CD14-positive monocyte (primary cell): ENCODE measurements at regions of chr2 and their contacts with region 1.

Region 1: GRCh38 chr2:24084386-24085361 is at the start of gene TP53I3:
- DNase-seq: peak; percentile 78 to 87 (median 85)
- H3K4me3 ChIP-seq: peak within 1 kb of the TSS; percentile 42 to 92 (median 74)
- H3K4me3 Mint-ChIP-seq: peak within 1 kb of the TSS; percentile 94
- H3K27ac ChIP-seq: peak within 1 kb of the TSS; percentile 86 to 92
- H3K27ac Mint-ChIP-seq: peak within 1 kb of the TSS; percentile 87 to 95 (median 93)
- H3K4me1 ChIP-seq: peaks cover 44 to 56% of the 10 kb centered on the region in 2 donors
- H3K4me1 Mint-ChIP-seq: peaks cover 53% of the 10 kb centered on the region
- H3K27me3 ChIP-seq: no peaks in the 10 kb centered on the region
- H3K27me3 Mint-ChIP-seq: peaks cover 0 to 1% (median 0%) of the 10 kb centered on the region in 3 donors
- CTCF ChIP-seq: peak; percentile 98
- polyA plus RNA-seq, gene TP53I3: 24.5 to 41.7 (median 34.9) TPM

Region 2: GRCh38 chr2:23824777-23825212 is 259.9 kb before region 1 on chr2:
- intact Hi-C with region 1: loop called (anchors 5 kb)
- DNase-seq: peak; percentile 16 to 42 (median 33)
- H3K4me3 ChIP-seq: no peak overlapping the region
- H3K4me3 Mint-ChIP-seq: no peak overlapping the region
- H3K27ac ChIP-seq: no peak overlapping the region
- H3K27ac Mint-ChIP-seq: peak overlapping the region in 1 of 7 donors; percentile 45
- H3K4me1 ChIP-seq: peaks cover 3 to 8% of the 10 kb centered on the region in 2 donors
- H3K4me1 Mint-ChIP-seq: peaks cover 14% of the 10 kb centered on the region
- H3K27me3 ChIP-seq: no peaks in the 10 kb centered on the region
- H3K27me3 Mint-ChIP-seq: no peaks in the 10 kb centered on the region
- CTCF ChIP-seq: peak; percentile 83

Region 3: DNA sequence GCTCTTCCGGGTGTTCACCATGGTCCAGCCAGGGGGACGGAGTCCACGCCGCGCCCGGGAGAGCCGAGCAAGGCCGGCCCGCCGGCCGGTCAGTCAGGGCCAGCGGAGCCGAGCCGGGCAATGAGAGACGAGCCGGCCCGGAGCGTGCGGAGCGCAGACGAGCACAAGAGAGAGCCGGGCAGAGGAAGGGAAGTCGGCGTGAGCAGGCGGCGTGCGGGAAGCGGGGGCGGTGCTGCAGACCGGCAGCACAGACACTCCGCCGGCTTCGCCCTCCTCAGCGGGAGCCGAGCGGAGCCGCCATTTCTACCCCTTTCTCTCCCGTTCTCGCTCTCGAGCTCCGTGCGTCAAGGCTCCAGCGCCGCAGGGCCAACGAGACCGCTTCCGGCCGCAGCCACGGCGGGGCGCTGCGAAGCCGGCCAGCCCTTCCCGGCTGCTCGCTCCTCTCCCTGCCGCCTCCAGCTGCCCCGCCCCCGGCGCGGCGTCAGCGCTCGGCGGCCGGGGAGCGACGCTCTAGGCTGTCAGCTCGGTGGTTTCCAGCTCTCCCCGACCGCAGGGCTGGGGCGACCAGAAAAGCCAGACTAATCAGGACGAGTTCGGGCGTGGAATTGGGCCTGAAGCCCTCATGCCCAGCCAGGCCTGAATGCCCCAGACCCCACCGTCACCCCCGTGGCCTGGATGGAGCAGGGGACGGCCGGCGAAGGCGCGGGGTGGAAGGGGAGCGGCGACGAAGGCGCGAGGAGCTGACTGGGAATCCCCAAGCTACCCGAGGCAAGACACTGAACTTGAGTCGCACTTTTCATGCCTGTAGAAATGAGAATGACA is 157.7 kb before region 1 on chr2 and contains the start of gene ATAD2B:
- intact Hi-C with region 1: loop called (anchors 2 to 5 kb)
- DNase-seq: peak; percentile 91 to 94 (median 93)
- H3K4me3 ChIP-seq: peak within 1 kb of the TSS; percentile 90 to 97 (median 90)
- H3K4me3 Mint-ChIP-seq: peak within 1 kb of the TSS; percentile 95 to 97
- H3K27ac ChIP-seq: peak within 1 kb of the TSS; percentile 98 to 99
- H3K27ac Mint-ChIP-seq: peak within 1 kb of the TSS; percentile 99 to 100 (median 99)
- H3K4me1 ChIP-seq: peaks cover 20 to 33% of the 10 kb centered on the region in 2 donors
- H3K4me1 Mint-ChIP-seq: peaks cover 43% of the 10 kb centered on the region
- H3K27me3 ChIP-seq: no peaks in the 10 kb centered on the region
- H3K27me3 Mint-ChIP-seq: no peaks in the 10 kb centered on the region
- CTCF ChIP-seq: peak; percentile 82
- polyA plus RNA-seq, gene ATAD2B: 4.9 to 12.1 (median 7.2) TPM

Region 4: DNA sequence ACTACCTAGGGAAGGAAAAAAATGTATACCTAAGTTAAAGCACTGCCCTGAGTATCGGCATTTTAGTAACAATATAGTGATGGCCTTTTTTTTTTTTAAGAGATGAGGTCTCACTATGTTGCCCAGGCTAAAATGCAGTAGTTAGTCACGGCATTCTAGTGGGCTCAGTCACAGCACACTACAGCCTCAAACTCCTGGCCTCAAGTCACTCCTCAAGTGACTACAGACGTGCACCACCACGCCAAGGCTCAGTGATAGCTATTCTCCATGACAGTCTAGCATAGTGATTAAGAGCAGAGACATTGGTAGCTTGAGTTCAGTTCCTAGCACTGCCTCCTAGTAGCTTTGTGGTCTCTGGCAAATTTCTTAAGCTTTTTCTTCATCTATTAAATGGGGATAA is 116.8 kb before region 1 on chr2:
- intact Hi-C with region 1: no loop called
- DNase-seq: no peak
- H3K4me3 ChIP-seq: no peak overlapping the region
- H3K4me3 Mint-ChIP-seq: no peak overlapping the region
- H3K27ac ChIP-seq: no peak overlapping the region
- H3K27ac Mint-ChIP-seq: no peak overlapping the region
- H3K4me1 ChIP-seq: no peaks in the 10 kb centered on the region
- H3K4me1 Mint-ChIP-seq: no peaks in the 10 kb centered on the region
- H3K27me3 ChIP-seq: no peaks in the 10 kb centered on the region
- H3K27me3 Mint-ChIP-seq: no peaks in the 10 kb centered on the region
- CTCF ChIP-seq: no peak

Region 5: GRCh38 chr2:23993736-23994269 is 90.9 kb before region 1 on chr2:
- intact Hi-C with region 1: no loop called
- DNase-seq: no peak
- H3K4me3 ChIP-seq: no peak overlapping the region
- H3K4me3 Mint-ChIP-seq: no peak overlapping the region
- H3K27ac ChIP-seq: no peak overlapping the region
- H3K27ac Mint-ChIP-seq: no peak overlapping the region
- H3K4me1 ChIP-seq: no peaks in the 10 kb centered on the region
- H3K4me1 Mint-ChIP-seq: no peaks in the 10 kb centered on the region
- H3K27me3 ChIP-seq: no peaks in the 10 kb centered on the region
- H3K27me3 Mint-ChIP-seq: peaks cover 0 to 2% (median 0%) of the 10 kb centered on the region in 3 donors
- CTCF ChIP-seq: no peak

Region 6: DNA sequence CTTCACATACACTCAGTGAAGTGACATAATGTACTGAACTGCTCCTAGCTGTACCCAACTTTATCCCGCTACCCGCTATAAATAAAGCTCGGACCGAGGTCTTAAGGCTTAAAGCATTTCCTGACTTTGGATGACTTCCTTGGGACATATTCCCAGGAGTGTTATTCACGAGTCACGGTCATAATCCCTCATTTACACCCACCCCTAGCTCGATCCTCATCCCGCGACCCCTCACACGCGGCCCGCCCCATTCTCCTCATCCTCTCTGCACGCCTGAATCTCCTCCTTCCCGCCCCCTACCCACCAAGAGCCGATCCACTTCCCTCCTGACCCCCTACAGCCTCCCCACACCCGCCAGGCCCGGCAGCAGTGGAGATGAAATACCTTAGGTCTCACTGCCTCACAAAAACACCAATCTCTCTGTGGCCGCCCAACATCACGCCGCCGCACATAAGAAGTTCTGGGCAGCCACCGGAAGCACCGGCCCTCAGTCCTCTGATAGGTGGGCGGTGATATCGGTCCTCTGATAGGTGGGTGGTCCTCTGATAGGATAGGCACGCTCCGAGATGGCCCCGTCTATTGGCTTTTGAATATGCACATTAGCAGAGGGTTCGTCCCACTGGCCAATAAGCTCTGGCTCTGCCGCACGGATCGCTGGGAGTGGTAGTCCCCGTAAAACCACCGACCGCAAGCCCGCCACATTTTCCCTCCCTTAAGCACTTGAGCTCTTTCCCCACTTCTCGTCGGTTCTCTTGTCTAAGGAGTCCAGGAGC is 37.6 kb before region 1 on chr2 and contains the start of gene WDCP:
- intact Hi-C with region 1: loop called (anchors 2 to 5 kb)
- DNase-seq: peak; percentile 91 to 98 (median 95)
- H3K4me3 ChIP-seq: peak within 1 kb of the TSS; percentile 63 to 97 (median 63)
- H3K4me3 Mint-ChIP-seq: peak within 1 kb of the TSS in 1 of 2 donors; percentile 96
- H3K27ac ChIP-seq: peak within 1 kb of the TSS in 1 of 2 donors; percentile 66
- H3K27ac Mint-ChIP-seq: peak within 1 kb of the TSS in 6 of 7 donors; percentile 23 to 90 (median 72)
- H3K4me1 ChIP-seq: peaks cover 24 to 32% of the 10 kb centered on the region in 2 donors
- H3K4me1 Mint-ChIP-seq: peaks cover 24% of the 10 kb centered on the region
- H3K27me3 ChIP-seq: peaks cover 11 to 21% of the 10 kb centered on the region in 2 donors
- H3K27me3 Mint-ChIP-seq: peaks cover 11 to 22% (median 19%) of the 10 kb centered on the region in 3 donors
- CTCF ChIP-seq: no peak
- polyA plus RNA-seq, gene WDCP: 0.43 to 1.3 (median 0.69) TPM